B cell (primary cell): ENCODE measurements at regions of chr4 and their contacts with region 1.

Region 1: GRCh38 chr4:473570-474457 is 25.1 kb downstream of the ZNF721 start:
- DNase-seq: peak; percentile 98
- ATAC-seq: peak; percentile 98
- H3K4me3 ChIP-seq: peak overlapping the region; percentile 58 to 86 (median 69)
- H3K4me3 Mint-ChIP-seq: peak overlapping the region; percentile 98
- H3K27ac ChIP-seq: peak overlapping the region; percentile 95 to 96
- H3K27ac Mint-ChIP-seq: peak overlapping the region; percentile 98
- H3K4me1 ChIP-seq: peaks cover 9 to 25% of the 10 kb centered on the region in 2 donors
- H3K4me1 Mint-ChIP-seq: peaks cover 39% of the 10 kb centered on the region
- H3K27me3 ChIP-seq: no peaks in the 10 kb centered on the region
- H3K27me3 Mint-ChIP-seq: no peaks in the 10 kb centered on the region
- CTCF ChIP-seq: no peak

Region 2: DNA sequence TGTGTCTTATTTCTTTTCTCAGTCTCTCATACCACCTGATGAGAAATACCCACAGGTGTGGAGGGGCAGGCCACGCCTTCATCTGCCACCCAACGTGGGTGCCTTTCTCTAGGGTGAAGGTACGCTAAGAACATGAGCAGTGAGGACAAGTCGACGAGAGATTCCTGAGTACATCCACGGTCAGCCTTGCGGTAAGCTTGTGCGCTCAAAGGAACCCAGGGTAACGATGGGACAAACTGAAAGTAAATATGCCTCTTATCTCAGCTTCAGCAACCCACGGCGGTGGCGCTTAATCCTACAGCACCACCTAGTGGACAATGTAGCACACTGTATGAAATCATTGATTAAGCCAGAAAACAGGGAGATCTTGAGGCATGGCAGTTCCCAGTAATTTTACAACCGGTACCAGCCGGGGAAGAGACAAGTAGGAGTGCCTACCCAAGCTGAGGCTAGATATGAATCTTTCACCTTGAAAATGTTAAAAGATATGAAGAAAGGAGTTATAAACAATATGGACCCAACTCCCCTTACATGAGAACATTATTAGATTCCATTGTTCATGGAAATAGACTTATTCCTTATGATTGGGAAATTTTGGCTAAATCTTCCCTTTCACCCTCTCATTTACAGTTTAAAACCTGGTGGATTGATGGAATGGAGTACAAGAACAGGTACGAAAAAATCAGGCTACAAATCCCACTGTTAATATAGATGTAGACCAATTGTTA is 231.5 kb before region 1 on chr4:
- CTCF ChIA-PET with region 1: no interaction called
- POLR2A ChIA-PET with region 1: no interaction called
- intact Hi-C with region 1: loop called (anchors 10 kb)
- DNase-seq: peak; percentile 87
- ATAC-seq: peak; percentile 95
- H3K4me3 ChIP-seq: peak overlapping the region in 4 of 5 experiments; percentile 40 to 72 (median 50)
- H3K4me3 Mint-ChIP-seq: peak overlapping the region; percentile 92
- H3K27ac ChIP-seq: peak overlapping the region; percentile 57 to 70
- H3K27ac Mint-ChIP-seq: peak overlapping the region; percentile 92
- H3K4me1 ChIP-seq: peaks cover 5 to 13% of the 10 kb centered on the region in 2 donors
- H3K4me1 Mint-ChIP-seq: peaks cover 13% of the 10 kb centered on the region
- H3K27me3 ChIP-seq: no peaks in the 10 kb centered on the region
- H3K27me3 Mint-ChIP-seq: no peaks in the 10 kb centered on the region
- CTCF ChIP-seq: peak; percentile 88

Region 3: GRCh38 chr4:328729-329128 is 145.1 kb before region 1 on chr4:
- CTCF ChIA-PET with region 1: no interaction called
- POLR2A ChIA-PET with region 1: no interaction called
- intact Hi-C with region 1: no loop called
- DNase-seq: no peak
- ATAC-seq: no peak
- H3K4me3 ChIP-seq: no peak overlapping the region
- H3K4me3 Mint-ChIP-seq: no peak overlapping the region
- H3K27ac ChIP-seq: no peak overlapping the region
- H3K27ac Mint-ChIP-seq: peak overlapping the region; percentile 50
- H3K4me1 ChIP-seq: peaks cover 0 to 3% of the 10 kb centered on the region in 2 donors
- H3K4me1 Mint-ChIP-seq: peaks cover 10% of the 10 kb centered on the region
- H3K27me3 ChIP-seq: no peaks in the 10 kb centered on the region
- H3K27me3 Mint-ChIP-seq: no peaks in the 10 kb centered on the region
- CTCF ChIP-seq: no peak

Region 4: GRCh38 chr4:498328-498904 is 24.6 kb after region 1 on chr4:
- CTCF ChIA-PET with region 1: interaction called, 3 read pairs
- POLR2A ChIA-PET with region 1: interaction called, 8 read pairs
- intact Hi-C with region 1: loop called (anchors 1 kb)
- DNase-seq: peak; percentile 55
- ATAC-seq: peak; percentile 4
- H3K4me3 ChIP-seq: peak overlapping the region; percentile 62 to 87 (median 82)
- H3K4me3 Mint-ChIP-seq: peak overlapping the region; percentile 92
- H3K27ac ChIP-seq: peak overlapping the region; percentile 92 to 96
- H3K27ac Mint-ChIP-seq: peak overlapping the region; percentile 97
- H3K4me1 ChIP-seq: peaks cover 11 to 16% of the 10 kb centered on the region in 2 donors
- H3K4me1 Mint-ChIP-seq: peaks cover 26% of the 10 kb centered on the region
- H3K27me3 ChIP-seq: no peaks in the 10 kb centered on the region
- H3K27me3 Mint-ChIP-seq: no peaks in the 10 kb centered on the region
- CTCF ChIP-seq: no peak